ENCODE measurements at regions of chr6 and their contacts with region 1.

Region 1: DNA sequence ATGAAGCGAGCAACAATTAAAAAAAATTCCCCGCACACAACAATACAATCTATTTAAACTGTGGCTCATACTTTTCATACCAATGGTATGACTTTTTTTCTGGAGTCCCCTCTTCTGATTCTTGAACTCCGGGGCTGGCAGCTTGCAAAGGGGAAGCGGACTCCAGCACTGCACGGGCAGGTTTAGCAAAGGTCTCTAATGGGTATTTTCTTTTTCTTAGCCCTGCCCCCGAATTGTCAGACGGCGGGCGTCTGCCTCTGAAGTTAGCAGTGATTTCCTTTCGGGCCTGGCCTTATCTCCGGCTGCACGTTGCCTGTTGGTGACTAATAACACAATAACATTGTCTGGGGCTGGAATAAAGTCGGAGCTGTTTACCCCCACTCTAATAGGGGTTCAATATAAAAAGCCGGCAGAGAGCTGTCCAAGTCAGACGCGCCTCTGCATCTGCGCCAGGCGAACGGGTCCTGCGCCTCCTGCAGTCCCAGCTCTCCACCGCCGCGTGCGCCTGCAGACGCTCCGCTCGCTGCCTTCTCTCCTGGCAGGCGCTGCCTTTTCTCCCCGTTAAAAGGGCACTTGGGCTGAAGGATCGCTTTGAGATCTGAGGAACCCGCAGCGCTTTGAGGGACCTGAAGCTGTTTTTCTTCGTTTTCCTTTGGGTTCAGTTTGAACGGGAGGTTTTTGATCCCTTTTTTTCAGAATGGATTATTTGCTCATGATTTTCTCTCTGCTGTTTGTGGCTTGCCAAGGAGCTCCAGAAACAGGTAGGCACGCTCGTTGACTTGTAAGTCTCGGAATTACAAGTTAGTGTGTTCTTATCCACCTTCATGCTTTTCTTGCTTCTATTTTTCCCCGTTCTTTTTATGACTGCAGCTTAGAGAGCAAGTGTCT is at the start of gene EDN1:
- DNase-seq: peak; percentile 62 to 88 (median 77)
- ATAC-seq: peak; percentile 78 to 87 (median 84)
- H3K4me3 ChIP-seq: peak within 1 kb of the TSS; percentile 7 to 51 (median 24)
- H3K27ac ChIP-seq: peak within 1 kb of the TSS; percentile 6 to 78 (median 54)
- H3K4me1 ChIP-seq: peaks cover 0 to 11% (median 0%) of the 10 kb centered on the region in 3 donors
- H3K27me3 ChIP-seq: no peaks in the 10 kb centered on the region
- CTCF ChIP-seq: peak in 3 of 4 donors; percentile 37 to 44 (median 41)
- total RNA-seq, gene EDN1: 2.4 to 16.0 (median 3.8) TPM

Region 2: GRCh38 chr6:12504319-12504966 is 214.3 kb after region 1 on chr6:
- intact Hi-C with region 1: loop called in 1 of 3 experiments (anchors 10 kb)
- DNase-seq: peak in 3 of 6 donors; percentile 13 to 30 (median 23)
- ATAC-seq: peak; percentile 66 to 98 (median 88)
- H3K4me3 ChIP-seq: no peak overlapping the region
- H3K27ac ChIP-seq: no peak overlapping the region
- H3K4me1 ChIP-seq: no peaks in the 10 kb centered on the region
- H3K27me3 ChIP-seq: no peaks in the 10 kb centered on the region
- CTCF ChIP-seq: peak in 3 of 4 donors; percentile 37 to 42 (median 38)

Region 3: DNA sequence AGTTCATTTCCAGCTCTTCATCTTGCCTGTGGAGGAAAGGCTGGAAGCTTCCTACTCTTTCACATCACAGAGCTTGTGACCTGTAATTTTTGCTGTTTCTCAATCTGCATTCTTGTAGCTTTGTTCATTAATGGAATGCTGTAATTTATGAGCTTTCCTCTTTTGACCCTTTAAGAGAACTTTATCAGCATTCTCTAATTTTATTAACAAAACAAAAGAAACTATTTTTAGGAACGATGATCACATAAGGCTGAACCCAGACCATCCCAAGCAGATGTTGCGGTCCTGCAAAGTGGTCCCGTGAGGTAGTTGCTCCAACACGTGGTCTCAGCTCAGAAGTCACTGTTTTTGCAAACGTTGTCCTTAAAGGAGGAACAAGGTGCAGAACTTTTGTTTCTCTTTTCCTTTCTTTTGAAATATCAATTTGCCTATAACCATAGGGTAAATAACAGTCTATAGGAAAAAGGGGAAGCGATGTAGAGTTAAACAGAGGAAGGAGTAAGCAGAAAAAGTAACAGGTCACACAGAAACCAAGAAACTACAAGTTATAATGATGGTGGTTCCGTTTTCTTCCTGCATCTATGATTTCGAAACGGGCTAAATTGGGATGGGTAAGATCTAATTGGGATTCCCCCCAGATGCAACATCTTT is 305.1 kb after region 1 on chr6:
- intact Hi-C with region 1: loop called in 2 of 3 experiments (anchors 5 to 10 kb)
- DNase-seq: no peak
- ATAC-seq: peak in 3 of 4 donors; percentile 35 to 52 (median 46)
- H3K4me3 ChIP-seq: no peak overlapping the region
- H3K27ac ChIP-seq: peak overlapping the region in 1 of 4 donors; percentile 38
- H3K4me1 ChIP-seq: peaks cover 0 to 9% (median 6%) of the 10 kb centered on the region in 3 donors
- H3K27me3 ChIP-seq: no peaks in the 10 kb centered on the region
- CTCF ChIP-seq: no peak

Region 4: GRCh38 chr6:12605888-12606345 is 315.7 kb after region 1 on chr6:
- intact Hi-C with region 1: loop called in 1 of 3 experiments (anchors 5 kb)
- DNase-seq: peak in 3 of 6 donors; percentile 34 to 53 (median 51)
- ATAC-seq: peak; percentile 83 to 94 (median 90)
- H3K4me3 ChIP-seq: no peak overlapping the region
- H3K27ac ChIP-seq: no peak overlapping the region
- H3K4me1 ChIP-seq: no peaks in the 10 kb centered on the region
- H3K27me3 ChIP-seq: no peaks in the 10 kb centered on the region
- CTCF ChIP-seq: peak; percentile 19 to 57 (median 54)

Measured in pancreas (tissue), 10 donors.